AG04449 (cell line): ENCODE measurements at regions of chr1 and their contacts with region 1.

Region 1: DNA sequence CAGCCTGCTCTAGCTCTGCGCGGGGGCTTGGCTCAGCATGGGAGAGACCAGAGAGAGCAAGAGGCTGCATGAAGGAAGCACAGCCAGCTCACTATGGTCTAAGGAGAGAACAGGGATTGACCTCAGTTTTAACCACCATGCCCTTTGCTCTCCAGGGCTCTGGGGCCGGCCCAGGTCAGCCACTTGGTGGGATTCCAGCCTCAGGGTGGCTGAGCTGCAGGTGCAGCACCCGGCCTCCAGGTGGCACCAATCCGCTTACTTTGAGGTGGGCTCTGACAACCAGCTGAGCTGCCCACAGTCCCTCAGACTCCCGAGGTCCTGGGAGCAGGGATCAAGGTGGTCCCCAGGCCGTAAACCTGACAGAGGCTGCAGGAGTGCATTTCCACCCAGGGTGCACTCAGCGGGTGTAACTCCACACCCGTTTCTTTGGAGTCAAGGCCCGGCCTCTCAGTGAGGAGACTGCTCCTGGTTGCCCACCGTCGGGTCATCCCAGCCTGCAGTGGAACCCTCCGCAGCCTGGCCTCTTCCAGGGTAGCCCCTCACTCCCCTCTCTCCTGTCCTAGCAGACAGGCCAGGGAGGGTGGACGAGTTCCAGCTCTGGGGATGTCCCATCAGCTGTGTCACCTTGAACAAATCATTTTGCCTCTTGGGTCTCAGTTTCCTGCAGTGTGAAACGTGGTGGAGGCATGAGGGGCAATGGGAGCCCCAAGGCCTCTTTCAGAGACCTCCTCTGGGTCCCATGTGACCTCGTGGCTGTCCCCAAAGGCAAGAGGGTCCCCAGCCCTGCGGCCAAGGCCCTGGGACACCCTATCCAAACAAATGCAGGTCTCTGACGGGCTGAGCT is 607 bp upstream of the LGR6 start:
- DNase-seq: no peak
- H3K4me3 ChIP-seq: no peak overlapping the region
- CTCF ChIP-seq: peak; percentile 90

Region 2: GRCh38 chr1:202176949-202177927 is 15.8 kb before region 1 on chr1:
- CTCF ChIA-PET with region 1: interaction called, 52 read pairs
- POLR2A ChIA-PET with region 1: no interaction called
- DNase-seq: no peak
- H3K4me3 ChIP-seq: no peak overlapping the region
- CTCF ChIP-seq: no peak

Region 3: GRCh38 chr1:202235856-202236837 is 43.2 kb after region 1 on chr1:
- CTCF ChIA-PET with region 1: interaction called, 11 read pairs
- POLR2A ChIA-PET with region 1: no interaction called
- DNase-seq: peak; percentile 79
- H3K4me3 ChIP-seq: peak overlapping the region; percentile 43
- CTCF ChIP-seq: peak; percentile 86

Region 4: GRCh38 chr1:202283379-202283844 is 90.4 kb after region 1 on chr1:
- CTCF ChIA-PET with region 1: interaction called, 24 read pairs
- POLR2A ChIA-PET with region 1: no interaction called
- DNase-seq: peak; percentile 40
- H3K4me3 ChIP-seq: no peak overlapping the region
- CTCF ChIP-seq: no peak

Region 5: DNA sequence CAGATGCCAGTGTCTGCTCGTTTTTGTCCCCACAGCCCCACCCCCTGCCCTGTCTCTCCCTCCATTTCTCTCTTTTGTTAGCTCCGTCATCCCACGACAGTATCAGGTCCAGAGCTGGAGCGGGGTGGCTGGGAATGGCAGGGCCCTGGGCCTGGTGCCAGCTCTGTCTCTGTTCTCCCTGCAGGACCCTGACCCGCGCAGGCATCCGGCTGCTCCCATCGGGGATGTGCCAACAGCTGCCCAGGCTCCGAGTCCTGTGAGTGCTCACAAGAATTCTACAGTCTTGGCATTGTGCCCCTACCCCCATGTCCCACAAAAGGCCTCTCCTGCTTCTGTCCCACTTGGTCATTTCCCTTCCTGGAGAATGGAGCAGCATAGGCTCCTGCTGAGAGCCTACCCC is 111.4 kb after region 1 on chr1:
- CTCF ChIA-PET with region 1: interaction called, 123 read pairs
- POLR2A ChIA-PET with region 1: no interaction called
- DNase-seq: no peak
- H3K4me3 ChIP-seq: no peak overlapping the region
- CTCF ChIP-seq: no peak

Region 6: DNA sequence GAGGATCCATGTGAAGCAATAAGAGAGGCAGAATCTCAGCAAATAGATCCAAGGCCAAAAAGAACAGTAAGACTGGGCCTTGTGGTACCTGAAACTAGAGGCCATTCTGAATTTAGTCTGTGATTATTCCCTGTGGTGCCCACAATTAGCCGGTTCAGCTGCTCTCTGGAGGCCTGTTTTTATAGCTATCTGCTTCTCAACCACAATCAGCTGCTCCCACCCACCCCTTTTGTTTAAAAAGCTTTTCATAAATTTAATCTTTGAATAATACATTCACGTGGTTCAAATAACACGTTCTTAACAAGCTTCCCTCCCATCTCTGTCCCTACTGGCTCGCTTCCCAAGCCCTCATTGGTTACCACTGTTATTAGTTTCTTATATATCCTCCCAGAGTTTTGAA is 130.7 kb after region 1 on chr1:
- CTCF ChIA-PET with region 1: interaction called, 479 read pairs
- POLR2A ChIA-PET with region 1: no interaction called
- DNase-seq: no peak
- H3K4me3 ChIP-seq: no peak overlapping the region
- CTCF ChIP-seq: no peak

Region 7: GRCh38 chr1:202343652-202344349 is 150.8 kb after region 1 on chr1:
- CTCF ChIA-PET with region 1: interaction called, 14 read pairs
- POLR2A ChIA-PET with region 1: no interaction called
- DNase-seq: no peak
- H3K4me3 ChIP-seq: no peak overlapping the region
- CTCF ChIP-seq: peak; percentile 45